PC-3 (cell line): ENCODE measurements at regions of chr11 and their contacts with region 1.

Region 1: DNA sequence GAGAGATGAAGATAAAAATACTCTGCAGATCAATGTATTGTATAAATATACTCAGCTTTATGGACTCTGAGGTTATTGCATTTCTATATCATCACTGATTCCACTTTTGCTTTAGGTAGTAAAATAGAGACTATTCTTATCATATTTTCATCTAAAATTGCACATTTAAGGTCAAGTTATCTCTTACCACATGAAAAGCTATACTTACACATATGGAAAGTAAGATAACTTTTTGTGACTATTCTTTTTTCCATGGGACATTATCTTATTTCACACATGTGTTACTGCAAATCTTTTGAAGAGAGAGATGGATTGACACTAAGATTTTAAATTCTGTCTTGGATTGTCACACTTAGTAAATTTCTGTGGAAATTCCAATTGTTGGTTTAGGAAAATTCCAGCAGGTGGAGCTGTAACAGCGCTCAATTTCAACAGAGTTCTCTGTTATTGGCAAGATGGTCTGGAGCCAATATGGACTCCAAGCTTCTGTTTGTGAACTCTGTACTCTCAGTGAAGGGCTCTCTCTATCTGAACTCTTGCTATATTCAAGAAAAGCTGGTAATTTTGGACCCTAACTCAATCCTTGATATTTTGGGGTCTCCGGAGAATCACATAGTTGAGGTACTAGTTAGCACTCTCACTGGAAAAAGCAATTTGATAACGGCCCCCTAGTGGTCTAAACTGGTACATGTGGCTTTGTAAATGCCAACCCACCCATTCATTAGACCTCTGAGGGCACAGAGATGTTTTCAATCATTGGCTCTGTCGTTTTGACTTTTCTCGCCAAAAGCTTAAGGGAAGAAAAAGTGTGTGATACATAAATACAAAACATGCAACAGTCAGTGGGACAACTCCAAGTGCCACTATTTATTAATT is 429.7 kb downstream of the ETS1 start:
- DNase-seq: peak; percentile 93
- ATAC-seq: peak; percentile 65
- H3K4me3 ChIP-seq: peak overlapping the region; percentile 46; the same call in 1 of the 2 replicates
- H3K27ac ChIP-seq: no peak overlapping the region
- H3K4me1 ChIP-seq: peaks cover 32% of the 10 kb centered on the region
- H3K27me3 ChIP-seq: no peaks in the 10 kb centered on the region
- CTCF ChIP-seq: peak; percentile 99

Region 2: DNA sequence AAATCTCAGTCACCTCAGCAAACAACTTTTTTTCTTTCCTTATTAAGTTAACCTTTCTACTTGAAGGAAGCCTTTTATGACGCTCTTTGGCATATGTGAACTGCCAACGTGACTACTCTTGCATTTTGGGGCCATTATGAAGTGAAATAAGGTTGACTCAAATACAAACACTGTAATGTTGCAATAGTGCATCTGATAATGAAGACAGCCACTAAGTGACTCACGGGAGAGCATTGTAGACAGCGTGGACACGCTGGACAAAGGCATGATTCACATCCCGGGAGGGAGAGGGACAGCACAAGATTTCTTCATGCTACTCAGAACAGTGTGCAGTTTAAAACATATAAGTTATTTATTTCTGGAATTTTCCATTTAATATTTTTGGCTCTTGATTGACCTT is 131.1 kb before region 1 on chr11:
- CTCF ChIA-PET with region 1: no interaction called
- POLR2A ChIA-PET with region 1: no interaction called
- intact Hi-C with region 1: loop called (anchors 1 kb)
- DNase-seq: peak; percentile 98
- ATAC-seq: peak; percentile 85
- H3K4me3 ChIP-seq: no peak overlapping the region
- H3K27ac ChIP-seq: peak overlapping the region; percentile 59
- H3K4me1 ChIP-seq: peaks cover 30% of the 10 kb centered on the region
- H3K27me3 ChIP-seq: no peaks in the 10 kb centered on the region
- CTCF ChIP-seq: no peak

Region 3: DNA sequence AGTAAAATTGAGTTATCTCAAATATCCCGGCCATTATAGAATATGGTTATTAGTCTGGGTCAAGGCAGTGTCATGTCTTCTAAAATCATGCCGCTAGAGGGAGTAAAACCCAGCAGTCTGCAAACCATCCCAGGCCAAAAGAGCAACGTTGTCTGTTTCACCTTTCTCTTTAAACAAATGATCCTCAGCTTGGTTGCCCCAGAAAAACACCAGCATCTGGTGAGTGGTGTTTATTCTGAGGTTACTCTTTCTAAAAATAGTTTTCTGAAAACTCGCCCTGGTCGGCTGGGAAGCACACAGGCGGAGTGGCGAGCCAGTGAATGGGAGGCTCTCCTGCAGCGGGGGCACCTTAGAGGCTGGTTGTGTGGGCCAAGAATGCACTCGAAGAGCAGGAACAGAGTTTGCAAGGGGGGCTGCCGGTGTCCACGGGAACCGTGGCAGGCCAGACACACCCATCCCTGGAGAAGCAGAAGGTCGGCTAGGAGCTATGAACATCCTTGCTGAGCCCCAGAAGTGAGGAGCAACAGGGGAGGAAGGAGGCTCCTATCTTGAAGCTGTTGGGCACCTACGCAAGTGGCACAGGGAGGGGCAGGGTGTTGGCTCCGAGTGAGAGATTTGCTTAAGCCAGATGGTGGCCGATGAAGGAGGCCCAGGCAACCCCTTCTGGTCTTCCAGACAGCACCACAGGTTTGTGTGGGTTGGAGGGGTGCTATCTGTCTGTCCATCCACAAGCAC is 132.6 kb after region 1 on chr11:
- CTCF ChIA-PET with region 1: interaction called, 3 read pairs
- POLR2A ChIA-PET with region 1: no interaction called
- intact Hi-C with region 1: loop called (anchors 1 kb)
- DNase-seq: peak; percentile 94
- ATAC-seq: peak; percentile 82
- H3K4me3 ChIP-seq: no peak overlapping the region
- H3K27ac ChIP-seq: peak overlapping the region; percentile 53
- H3K4me1 ChIP-seq: peaks cover 39% of the 10 kb centered on the region
- H3K27me3 ChIP-seq: no peaks in the 10 kb centered on the region
- CTCF ChIP-seq: peak; percentile 97

Region 4: DNA sequence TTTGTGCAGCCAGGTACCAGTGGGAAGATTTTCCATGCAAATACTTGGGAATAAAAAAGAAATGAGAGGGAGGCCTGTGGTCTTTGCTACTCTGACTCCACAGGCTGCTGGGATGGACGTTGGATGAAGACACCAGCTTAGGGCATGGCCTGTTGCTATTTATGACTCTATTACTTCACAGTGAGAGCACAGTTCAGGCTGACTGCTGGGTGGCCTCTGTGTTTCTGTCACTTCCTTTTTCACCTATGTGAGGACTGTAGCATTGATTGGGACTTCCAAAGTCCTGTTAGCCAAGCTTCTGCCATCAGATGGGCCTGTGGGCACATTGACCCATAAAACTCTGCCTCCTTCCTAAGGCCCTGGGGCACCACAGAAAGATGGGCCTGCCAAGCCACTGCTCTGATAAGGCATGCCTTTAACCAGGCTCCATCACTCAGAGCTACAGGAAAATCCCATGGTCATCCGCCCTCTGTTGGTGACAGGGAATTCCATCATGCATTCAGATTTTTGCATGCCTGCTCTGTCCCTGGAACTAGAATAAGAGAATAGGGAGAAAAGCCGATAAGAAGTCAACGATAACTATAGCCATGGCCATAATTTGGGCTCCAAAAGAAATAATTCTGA is 644.8 kb after region 1 on chr11:
- CTCF ChIA-PET with region 1: interaction called, 5 read pairs
- POLR2A ChIA-PET with region 1: no interaction called
- intact Hi-C with region 1: loop called (anchors 1 kb)
- DNase-seq: peak; percentile 72
- ATAC-seq: peak; percentile 92
- H3K4me3 ChIP-seq: no peak overlapping the region
- H3K27ac ChIP-seq: no peak overlapping the region
- H3K4me1 ChIP-seq: no peaks in the 10 kb centered on the region
- H3K27me3 ChIP-seq: no peaks in the 10 kb centered on the region
- CTCF ChIP-seq: peak; percentile 86

Region 5: DNA sequence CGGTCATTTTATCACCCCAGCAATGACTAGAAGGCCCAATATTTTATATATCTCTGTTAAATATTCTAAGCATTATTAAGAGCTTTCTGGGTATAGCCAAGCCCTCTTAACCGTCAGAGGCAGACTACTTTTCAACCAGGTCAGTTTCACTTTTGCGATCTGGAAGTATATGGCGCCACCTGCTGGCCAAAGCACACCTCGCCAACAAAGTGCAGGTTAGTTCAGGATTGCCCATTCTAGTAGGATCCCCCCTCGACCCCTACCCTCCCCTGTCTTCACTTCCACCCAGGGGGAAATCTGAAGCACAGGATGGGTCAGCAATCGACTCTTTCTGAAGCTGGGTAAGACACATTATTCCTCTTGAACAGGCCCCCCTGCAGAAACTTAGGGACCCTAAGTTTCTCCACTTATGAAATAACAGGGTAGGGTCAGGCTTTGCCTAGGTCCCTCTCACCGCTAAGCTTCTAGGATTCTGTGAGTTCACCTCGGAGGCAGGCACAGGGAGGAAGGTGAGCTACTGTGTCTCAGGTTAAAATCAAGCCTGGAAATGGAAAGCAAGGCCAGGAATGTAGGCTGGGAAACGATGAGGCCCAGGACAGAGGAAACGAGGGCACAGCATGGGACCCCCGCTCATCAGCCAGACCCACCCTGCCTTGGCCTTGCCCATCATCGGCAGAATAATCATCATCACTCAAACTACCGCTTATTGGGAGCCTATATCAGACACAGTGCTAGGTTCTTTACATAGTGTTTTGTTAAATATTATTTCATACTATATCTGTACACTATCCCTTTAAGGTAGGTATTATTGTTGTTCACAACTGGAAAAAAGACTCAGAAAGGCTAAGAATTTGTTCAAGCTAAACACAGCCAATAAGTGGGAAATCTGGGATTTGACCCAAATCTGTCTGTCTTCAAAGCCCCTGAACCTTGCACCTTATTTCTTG is 673.8 kb after region 1 on chr11:
- CTCF ChIA-PET with region 1: interaction called, 6 read pairs
- POLR2A ChIA-PET with region 1: no interaction called
- intact Hi-C with region 1: loop called (anchors 1 kb)
- DNase-seq: peak; percentile 91
- ATAC-seq: peak; percentile 94
- H3K4me3 ChIP-seq: peak overlapping the region; percentile 50; the same call in 1 of the 2 replicates
- H3K27ac ChIP-seq: no peak overlapping the region
- H3K4me1 ChIP-seq: peaks cover 18% of the 10 kb centered on the region; the same call in 1 of the 2 replicates
- H3K27me3 ChIP-seq: no peaks in the 10 kb centered on the region
- CTCF ChIP-seq: peak; percentile 97

Region 6: GRCh38 chr11:128956401-128957201 is 798.9 kb after region 1 on chr11:
- CTCF ChIA-PET with region 1: no interaction called
- POLR2A ChIA-PET with region 1: no interaction called
- intact Hi-C with region 1: loop called (anchors 10 kb)
- DNase-seq: peak; percentile 95
- ATAC-seq: peak; percentile 93
- H3K4me3 ChIP-seq: no peak overlapping the region
- H3K27ac ChIP-seq: no peak overlapping the region
- H3K4me1 ChIP-seq: no peaks in the 10 kb centered on the region
- H3K27me3 ChIP-seq: no peaks in the 10 kb centered on the region
- CTCF ChIP-seq: peak; percentile 94